ENCODE measurements at regions of chr3 and their contacts with region 1.

Region 1: DNA sequence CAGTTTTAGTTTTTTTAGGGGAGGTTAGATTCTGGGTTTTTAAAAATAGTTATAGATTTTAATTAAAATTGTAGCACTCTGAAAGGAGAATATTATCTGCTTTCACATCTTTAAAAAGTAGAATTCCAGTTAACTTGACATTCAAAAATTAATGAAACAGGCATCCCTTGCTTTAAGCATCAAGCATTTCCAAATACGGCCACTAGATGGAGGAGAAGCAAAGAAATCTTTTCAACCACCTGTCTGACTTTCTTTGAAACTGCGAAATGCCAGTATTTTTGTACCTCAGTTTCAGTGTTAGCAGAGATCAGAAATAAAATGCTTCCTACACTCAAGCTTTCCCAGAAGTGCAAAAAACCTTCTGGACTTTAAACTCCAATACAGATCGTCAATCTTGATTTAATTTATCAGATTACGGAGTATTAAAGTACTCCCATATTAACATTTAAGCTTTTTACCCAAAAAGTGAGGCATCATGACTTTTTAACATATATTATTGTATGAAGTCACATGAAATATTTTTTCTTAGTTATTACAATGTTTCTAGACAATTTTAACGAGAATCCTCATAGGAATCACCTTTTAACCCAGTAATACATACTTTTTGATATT is 153.3 kb downstream of the P3H2 start:
- DNase-seq: no peak
- H3K4me3 ChIP-seq: no peak overlapping the region
- H3K27ac ChIP-seq: no peak overlapping the region
- H3K4me1 ChIP-seq: peaks cover 0 to 2% (median under 1%) of the 10 kb centered on the region in 4 donors
- H3K27me3 ChIP-seq: no peaks in the 10 kb centered on the region
- CTCF ChIP-seq: peak; percentile 80 to 91 (median 84)
- EP300 ChIP-seq: no peak
- POLR2A ChIP-seq: no peak

Region 2: GRCh38 chr3:190120269-190121060 is 153.1 kb after region 1 on chr3 and contains the start of gene P3H2:
- intact Hi-C with region 1: loop called (anchors 2 kb)
- DNase-seq: peak; percentile 93
- H3K4me3 ChIP-seq: peak within 1 kb of the TSS; percentile 73 to 92 (median 77)
- H3K27ac ChIP-seq: peak within 1 kb of the TSS; percentile 85 to 94 (median 90)
- H3K4me1 ChIP-seq: peaks cover 10 to 55% (median 43%) of the 10 kb centered on the region in 4 donors
- H3K27me3 ChIP-seq: no peaks in the 10 kb centered on the region
- CTCF ChIP-seq: peak; percentile 55 to 71 (median 70)
- EP300 ChIP-seq: no peak
- POLR2A ChIP-seq: no peak
- total RNA-seq, gene P3H2: 15.6 to 41.5 (median 27.1) TPM

Region 3: DNA sequence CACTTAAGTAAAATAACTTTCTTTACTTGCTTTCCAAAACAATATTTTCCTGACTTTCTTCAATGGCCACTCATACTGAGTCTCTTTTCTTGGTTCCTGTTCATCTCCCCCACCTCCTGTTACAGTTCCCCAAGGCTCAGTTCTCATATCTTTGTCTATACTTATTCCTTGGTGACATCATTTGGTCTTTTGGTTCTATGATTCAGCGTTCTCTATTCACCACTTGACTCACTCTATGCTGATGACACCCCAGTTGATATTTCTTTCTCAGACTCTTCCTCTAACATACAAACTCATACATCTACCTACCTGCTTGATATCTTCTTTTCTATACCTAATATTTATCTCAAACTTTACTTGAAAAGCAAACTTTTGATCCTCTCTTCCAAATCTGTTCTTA is 238.4 kb after region 1 on chr3:
- intact Hi-C with region 1: loop called (anchors 2 kb)
- DNase-seq: no peak
- H3K4me3 ChIP-seq: no peak overlapping the region
- H3K27ac ChIP-seq: no peak overlapping the region
- H3K4me1 ChIP-seq: no peaks in the 10 kb centered on the region
- H3K27me3 ChIP-seq: no peaks in the 10 kb centered on the region
- CTCF ChIP-seq: no peak
- EP300 ChIP-seq: no peak
- POLR2A ChIP-seq: no peak